ENCODE measurements at regions of chr5 and their contacts with region 1.

Region 1: GRCh38 chr5:73417303-73418034 is 31.1 kb downstream of the FOXD1 start:
- DNase-seq: no peak
- ATAC-seq: no peak
- H3K4me3 ChIP-seq: no peak overlapping the region
- H3K4me3 Mint-ChIP-seq: no peak overlapping the region
- H3K27ac ChIP-seq: no peak overlapping the region
- H3K27ac Mint-ChIP-seq: no peak overlapping the region
- H3K4me1 ChIP-seq: peaks cover 11% of the 10 kb centered on the region
- H3K4me1 Mint-ChIP-seq: peaks cover 17% of the 10 kb centered on the region
- H3K27me3 ChIP-seq: peaks cover 62 to 83% of the 10 kb centered on the region in 2 experiments
- H3K27me3 Mint-ChIP-seq: peaks cover 96% of the 10 kb centered on the region
- CTCF ChIP-seq: no peak

Region 2: DNA sequence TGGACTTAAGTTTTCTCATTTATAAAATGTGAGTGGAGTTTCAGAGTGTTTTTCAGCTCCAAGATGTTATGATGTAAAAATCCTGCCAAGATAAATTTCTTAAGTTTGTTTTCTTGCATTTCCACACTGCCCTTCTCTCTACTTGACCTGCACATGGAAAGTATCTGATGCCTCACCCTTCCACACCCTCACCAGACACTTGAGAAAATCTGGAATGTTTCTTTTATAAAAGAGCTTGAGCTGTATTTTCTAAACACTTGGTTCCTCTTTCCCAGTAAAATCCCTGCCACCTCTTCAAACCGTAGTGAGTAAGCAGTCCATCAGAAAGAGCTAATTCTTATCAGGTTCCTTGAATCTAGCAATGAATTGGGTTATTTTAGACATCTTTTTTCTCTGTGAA is 11.8 kb before region 1 on chr5:
- CTCF ChIA-PET with region 1: interaction called, 4 read pairs
- POLR2A ChIA-PET with region 1: interaction called, 11 read pairs
- intact Hi-C with region 1: no loop called
- DNase-seq: no peak
- ATAC-seq: no peak
- H3K4me3 ChIP-seq: no peak overlapping the region
- H3K4me3 Mint-ChIP-seq: no peak overlapping the region
- H3K27ac ChIP-seq: no peak overlapping the region
- H3K27ac Mint-ChIP-seq: no peak overlapping the region
- H3K4me1 ChIP-seq: peaks cover 8% of the 10 kb centered on the region
- H3K4me1 Mint-ChIP-seq: no peaks in the 10 kb centered on the region
- H3K27me3 ChIP-seq: peaks cover 0 to 4% of the 10 kb centered on the region in 2 experiments
- H3K27me3 Mint-ChIP-seq: peaks cover 49% of the 10 kb centered on the region
- CTCF ChIP-seq: no peak

Region 3: DNA sequence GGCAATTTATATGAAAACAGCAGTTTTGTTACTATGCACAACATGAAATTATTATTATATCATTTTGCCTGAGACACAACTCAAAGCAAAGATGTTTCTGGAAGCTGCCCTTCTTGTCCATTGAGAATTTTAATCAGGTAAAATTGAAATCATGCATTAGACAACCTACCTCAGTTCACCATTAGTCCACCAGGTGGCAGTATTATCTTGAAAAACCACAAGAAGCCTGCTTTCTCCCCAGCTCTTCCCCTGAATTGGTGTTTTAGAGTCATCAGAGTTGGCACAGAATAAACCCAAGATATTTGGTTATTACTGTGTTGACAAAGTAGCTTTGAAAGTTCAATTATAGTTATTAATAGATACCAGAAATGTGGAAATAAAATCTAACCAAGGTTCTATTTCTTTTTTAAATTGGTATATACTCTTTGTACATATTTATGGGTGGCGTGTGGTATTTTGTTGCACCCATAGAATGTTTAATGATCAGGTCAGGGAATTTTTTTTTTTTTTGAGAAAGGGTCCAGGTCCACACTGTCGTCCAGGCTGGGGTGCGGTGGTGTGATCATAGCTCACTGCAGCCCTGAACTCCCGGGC is 173.7 kb after region 1 on chr5:
- CTCF ChIA-PET with region 1: no interaction called
- POLR2A ChIA-PET with region 1: no interaction called
- intact Hi-C with region 1: no loop called
- DNase-seq: peak in 10 of 14 experiments; percentile 9 to 83 (median 40)
- ATAC-seq: peak; percentile 62
- H3K4me3 ChIP-seq: no peak overlapping the region
- H3K4me3 Mint-ChIP-seq: no peak overlapping the region
- H3K27ac ChIP-seq: no peak overlapping the region
- H3K27ac Mint-ChIP-seq: no peak overlapping the region
- H3K4me1 ChIP-seq: no peaks in the 10 kb centered on the region
- H3K4me1 Mint-ChIP-seq: no peaks in the 10 kb centered on the region
- H3K27me3 ChIP-seq: no peaks in the 10 kb centered on the region
- H3K27me3 Mint-ChIP-seq: no peaks in the 10 kb centered on the region
- CTCF ChIP-seq: peak; percentile 92

Measured in CD4-positive, alpha-beta T cell (primary cell).